Activated B cell treated with CpG ODN at 0.5 μM for 24 hours (primary cell): ENCODE measurements at regions of chr12 and their contacts with region 1.

Region 1: GRCh38 chr12:52023182-52023975 is 16.6 kb downstream of the TAMALIN start:
- DNase-seq: peak; percentile 92
- ATAC-seq: peak; percentile 63
- H3K4me3 Mint-ChIP-seq: peak overlapping the region; percentile 81
- H3K27ac Mint-ChIP-seq: no peak overlapping the region
- H3K4me1 Mint-ChIP-seq: peaks cover 57% of the 10 kb centered on the region
- H3K27me3 Mint-ChIP-seq: no peaks in the 10 kb centered on the region
- CTCF ChIP-seq: peak; percentile 86

Region 2: GRCh38 chr12:51424662-51425438 is 598.5 kb before region 1 on chr12 and contains the start of gene SLC4A8:
- CTCF ChIA-PET with region 1: no interaction called
- POLR2A ChIA-PET with region 1: no interaction called
- intact Hi-C with region 1: loop called (anchors 5 kb)
- DNase-seq: peak; percentile 75
- ATAC-seq: peak; percentile 92
- H3K4me3 Mint-ChIP-seq: peak within 1 kb of the TSS; percentile 83
- H3K27ac Mint-ChIP-seq: peak within 1 kb of the TSS; percentile 25
- H3K4me1 Mint-ChIP-seq: peaks cover 16% of the 10 kb centered on the region
- H3K27me3 Mint-ChIP-seq: no peaks in the 10 kb centered on the region
- CTCF ChIP-seq: no peak
- total RNA-seq, gene SLC4A8: 5.2 and 5.8 TPM in 2 replicates

Region 3: GRCh38 chr12:51994959-51995358 is 28.4 kb before region 1 on chr12:
- CTCF ChIA-PET with region 1: interaction called, 310 read pairs
- POLR2A ChIA-PET with region 1: interaction called, 54 read pairs
- intact Hi-C with region 1: loop called (anchors 1 kb)
- DNase-seq: no peak
- ATAC-seq: no peak
- H3K4me3 Mint-ChIP-seq: no peak overlapping the region
- H3K27ac Mint-ChIP-seq: no peak overlapping the region
- H3K4me1 Mint-ChIP-seq: peaks cover 3% of the 10 kb centered on the region
- H3K27me3 Mint-ChIP-seq: no peaks in the 10 kb centered on the region
- CTCF ChIP-seq: no peak

Region 4: DNA sequence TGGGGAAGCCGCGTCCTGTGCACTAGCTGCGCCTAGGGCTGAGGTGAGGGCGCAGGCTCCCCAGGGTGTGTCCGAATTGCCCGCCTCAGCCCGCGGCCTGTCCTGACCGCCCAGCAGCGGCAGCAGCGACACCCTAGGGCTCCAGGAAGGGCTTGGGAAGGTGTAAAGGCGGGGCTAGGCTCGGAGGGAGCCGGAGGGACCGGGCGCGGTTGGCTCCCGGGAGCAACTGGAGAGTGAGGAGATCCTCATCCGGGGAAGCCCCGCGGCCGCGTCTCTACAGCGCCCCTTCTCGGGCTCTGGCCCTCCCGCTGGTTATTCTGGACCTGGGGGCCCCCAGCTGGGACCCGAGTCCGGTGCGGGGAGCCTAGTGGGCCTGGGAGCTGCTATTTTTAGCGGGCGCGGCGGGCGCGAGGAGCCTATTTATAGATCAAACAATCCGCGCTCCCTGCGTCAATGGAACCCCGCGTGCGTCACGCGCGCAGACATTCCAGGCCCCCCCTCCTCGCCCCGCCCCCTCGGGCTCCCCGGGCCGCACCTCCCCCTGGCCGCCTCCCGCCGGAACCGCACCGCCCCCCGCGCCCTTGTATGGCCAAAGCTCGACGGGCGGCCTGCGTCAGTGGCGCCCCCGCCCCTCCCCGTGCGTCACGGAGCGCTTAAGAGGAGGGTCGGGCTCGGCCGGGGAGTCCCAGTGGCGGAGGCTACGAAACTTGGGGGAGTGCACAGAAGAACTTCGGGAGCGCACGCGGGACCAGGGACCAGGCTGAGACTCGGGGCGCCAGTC is 27.6 kb after region 1 on chr12 and contains the start of gene NR4A1:
- CTCF ChIA-PET with region 1: interaction called, 51 read pairs
- POLR2A ChIA-PET with region 1: interaction called, 51 read pairs
- intact Hi-C with region 1: loop called (anchors 1 kb)
- DNase-seq: peak; percentile 100
- ATAC-seq: peak; percentile 82
- H3K4me3 Mint-ChIP-seq: peak within 1 kb of the TSS; percentile 92
- H3K27ac Mint-ChIP-seq: peak within 1 kb of the TSS; percentile 95
- H3K4me1 Mint-ChIP-seq: peaks cover 49% of the 10 kb centered on the region
- H3K27me3 Mint-ChIP-seq: no peaks in the 10 kb centered on the region
- CTCF ChIP-seq: no peak
- total RNA-seq, gene NR4A1: 18.8 and 24.2 TPM in 2 replicates

Region 5: DNA sequence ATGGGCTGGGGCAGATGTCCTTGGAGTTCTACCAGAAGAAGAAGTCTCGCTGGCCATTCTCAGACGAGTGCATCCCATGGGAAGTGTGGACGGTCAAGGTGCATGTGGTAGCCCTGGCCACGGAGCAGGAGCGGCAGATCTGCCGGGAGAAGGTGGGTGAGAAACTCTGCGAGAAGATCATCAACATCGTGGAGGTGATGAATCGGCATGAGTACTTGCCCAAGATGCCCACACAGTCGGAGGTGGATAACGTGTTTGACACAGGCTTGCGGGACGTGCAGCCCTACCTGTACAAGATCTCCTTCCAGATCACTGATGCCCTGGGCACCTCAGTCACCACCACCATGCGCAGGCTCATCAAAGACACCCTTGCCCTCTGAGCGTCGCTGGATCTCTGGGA is 53.4 kb after region 1 on chr12:
- CTCF ChIA-PET with region 1: interaction called, 342 read pairs
- POLR2A ChIA-PET with region 1: interaction called, 22 read pairs
- intact Hi-C with region 1: no loop called
- DNase-seq: no peak
- ATAC-seq: no peak
- H3K4me3 Mint-ChIP-seq: no peak overlapping the region
- H3K27ac Mint-ChIP-seq: no peak overlapping the region
- H3K4me1 Mint-ChIP-seq: peaks cover 49% of the 10 kb centered on the region
- H3K27me3 Mint-ChIP-seq: no peaks in the 10 kb centered on the region
- CTCF ChIP-seq: no peak

Region 6: GRCh38 chr12:53005986-53006809 is 982.8 kb after region 1 on chr12 and contains the start of gene EIF4B:
- CTCF ChIA-PET with region 1: interaction called, 3 read pairs
- POLR2A ChIA-PET with region 1: no interaction called
- intact Hi-C with region 1: loop called (anchors 2 kb)
- DNase-seq: peak; percentile 97
- ATAC-seq: peak; percentile 90
- H3K4me3 Mint-ChIP-seq: peak within 1 kb of the TSS; percentile 98
- H3K27ac Mint-ChIP-seq: peak within 1 kb of the TSS; percentile 98
- H3K4me1 Mint-ChIP-seq: peaks cover 51% of the 10 kb centered on the region
- H3K27me3 Mint-ChIP-seq: peaks cover 1% of the 10 kb centered on the region
- CTCF ChIP-seq: no peak
- total RNA-seq, gene EIF4B: 726 and 733 TPM in 2 replicates